Heart left ventricle (tissue), 16 donors: ENCODE measurements at regions of chr11 and their contacts with region 1.

Region 1: DNA sequence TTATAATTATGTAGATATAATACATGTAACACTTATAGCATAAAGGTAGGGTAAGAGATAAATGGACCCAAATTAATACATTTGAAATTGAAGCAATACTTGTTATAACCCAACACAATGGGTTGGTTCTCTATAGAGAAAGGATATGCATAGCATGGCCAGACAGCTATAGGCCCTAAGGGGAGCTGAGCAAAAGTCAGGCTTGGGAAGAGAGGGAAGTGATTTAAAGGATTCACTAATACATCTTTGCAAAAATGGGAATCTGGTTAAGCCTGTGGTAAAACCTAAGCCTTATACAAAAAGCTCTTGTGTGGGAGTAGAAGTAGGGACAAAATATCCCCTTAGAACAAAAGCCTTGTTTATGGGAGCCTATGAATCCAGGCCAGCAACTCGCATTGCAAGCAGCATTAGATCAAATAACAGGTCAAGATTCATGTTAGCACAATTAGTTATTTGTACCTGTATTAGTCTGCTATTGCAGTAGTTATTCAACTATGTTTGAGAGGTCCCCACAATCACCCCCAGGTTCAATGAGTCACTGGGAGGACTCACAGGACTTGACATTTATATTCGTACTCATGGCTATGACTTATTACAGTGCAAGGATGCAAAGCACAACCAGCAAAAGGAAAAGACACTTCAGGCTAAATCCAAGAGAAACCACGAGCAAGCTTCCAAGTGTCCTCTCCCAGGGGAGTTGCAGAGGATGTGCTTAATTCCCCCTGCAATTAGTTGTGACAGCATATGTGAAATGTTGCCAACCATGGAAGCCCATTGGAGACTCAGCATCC is 144.7 kb upstream of the LMO1 start:
- DNase-seq: no peak
- ATAC-seq: no peak
- H3K4me3 ChIP-seq: no peak overlapping the region
- H3K27ac ChIP-seq: no peak overlapping the region
- H3K4me1 ChIP-seq: no peaks in the 10 kb centered on the region
- H3K27me3 ChIP-seq: no peaks in the 10 kb centered on the region
- CTCF ChIP-seq: no peak
- POLR2A ChIP-seq: no peak

Region 2: DNA sequence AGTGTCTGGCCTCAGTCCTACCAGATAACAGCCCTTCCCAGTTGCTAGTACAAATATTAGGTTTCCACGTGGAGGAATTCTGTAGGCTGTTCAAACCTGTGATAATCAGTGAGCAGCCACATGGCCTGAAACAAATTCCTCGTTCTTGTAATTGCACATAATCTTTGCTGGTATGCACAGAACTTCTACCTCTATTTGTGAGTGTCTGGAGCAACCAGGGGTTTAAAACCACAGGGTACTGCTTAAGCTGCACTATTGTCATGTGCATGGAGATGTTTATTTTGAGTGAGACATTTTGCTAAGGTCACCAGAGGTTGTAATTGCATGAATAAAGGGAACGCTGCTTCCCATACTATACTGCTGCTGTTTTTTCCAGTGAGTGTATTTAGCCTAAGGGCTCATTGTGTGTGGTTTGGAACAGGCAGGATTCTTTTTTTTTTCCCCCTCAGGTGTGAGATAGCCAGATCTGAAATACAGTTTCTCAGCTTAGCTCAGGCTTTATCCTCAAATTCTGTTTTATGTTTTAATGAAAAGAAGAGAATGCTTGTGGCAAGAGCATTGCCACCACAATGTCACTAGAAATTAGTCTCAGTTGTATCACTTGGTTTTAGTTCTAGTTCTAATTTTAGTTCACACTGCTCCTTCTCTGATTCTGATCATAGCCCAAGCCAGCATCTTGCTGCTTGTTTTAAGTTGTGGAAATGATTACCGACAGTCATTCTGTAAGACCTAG is 795.5 kb before region 1 on chr11:
- intact Hi-C with region 1: no loop called
- DNase-seq: no peak
- ATAC-seq: peak; percentile 39 to 57 (median 50)
- H3K4me3 ChIP-seq: no peak overlapping the region
- H3K27ac ChIP-seq: peak overlapping the region in 1 of 12 donors; percentile 15
- H3K4me1 ChIP-seq: peaks cover 0 to 18% (median 10%) of the 10 kb centered on the region in 12 donors
- H3K27me3 ChIP-seq: no peaks in the 10 kb centered on the region
- CTCF ChIP-seq: no peak
- POLR2A ChIP-seq: no peak

Region 3: GRCh38 chr11:8426076-8426475 is 17.7 kb after region 1 on chr11:
- intact Hi-C with region 1: loop called in 1 of 10 experiments (anchors 1 kb)
- DNase-seq: peak in 1 of 5 donors; percentile 36
- ATAC-seq: peak in 1 of 4 donors; percentile 47
- H3K4me3 ChIP-seq: no peak overlapping the region
- H3K27ac ChIP-seq: no peak overlapping the region
- H3K4me1 ChIP-seq: peaks cover 0 to 8% (median 0%) of the 10 kb centered on the region in 12 donors
- H3K27me3 ChIP-seq: no peaks in the 10 kb centered on the region
- CTCF ChIP-seq: no peak
- POLR2A ChIP-seq: no peak

Region 4: DNA sequence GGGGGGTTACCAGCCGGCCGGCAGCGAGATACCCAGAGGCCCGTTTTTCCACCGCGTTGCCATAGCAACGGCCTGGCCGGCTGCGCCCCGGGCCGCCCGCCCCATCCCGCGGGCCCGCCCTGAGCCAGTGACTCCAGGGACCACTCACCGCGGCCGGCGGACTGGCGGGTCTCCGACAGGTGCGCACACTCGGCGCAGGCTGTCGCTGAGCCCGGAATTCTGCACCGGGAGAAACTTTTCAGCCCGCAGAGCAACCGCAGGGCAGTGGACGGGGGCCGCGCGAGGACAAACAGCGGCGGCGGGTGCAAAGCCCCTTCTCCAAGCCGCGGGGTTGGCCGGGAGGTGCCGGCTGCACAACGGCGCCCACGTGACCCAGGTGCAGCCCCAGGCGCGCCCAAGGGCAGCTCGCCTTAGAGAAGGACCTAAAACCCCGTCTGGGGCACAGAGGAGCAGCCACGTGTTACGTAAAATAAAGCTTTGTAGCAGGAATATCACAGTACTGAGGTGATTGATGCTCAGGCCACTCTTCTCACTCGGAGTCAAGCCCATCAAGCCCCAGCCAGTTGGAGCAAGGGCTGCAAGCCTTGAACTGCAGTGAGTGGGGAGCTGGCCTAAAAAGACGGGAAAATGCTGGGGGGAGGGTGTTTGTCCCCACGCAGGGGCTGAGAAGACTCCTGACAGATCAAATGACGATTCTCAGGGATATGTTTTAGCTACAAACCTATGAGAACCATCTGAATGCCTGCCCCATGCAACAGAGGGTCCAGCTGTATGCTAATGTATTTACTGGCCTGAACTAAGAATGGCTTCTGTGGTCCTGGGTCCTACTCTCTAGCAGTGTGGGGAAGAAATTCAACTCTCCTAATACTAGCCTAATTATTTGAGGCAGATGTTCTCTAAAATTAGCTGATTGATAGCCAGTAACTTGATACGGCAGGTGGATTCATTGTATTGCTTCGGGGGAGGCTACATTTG is 185.9 kb after region 1 on chr11 and contains the start of gene STK33:
- intact Hi-C with region 1: no loop called
- DNase-seq: peak; percentile 68 to 81 (median 74)
- ATAC-seq: peak; percentile 82 to 97 (median 96)
- H3K4me3 ChIP-seq: peak within 1 kb of the TSS; percentile 36 to 79 (median 65)
- H3K27ac ChIP-seq: peak within 1 kb of the TSS; percentile 9 to 75 (median 60)
- H3K4me1 ChIP-seq: peaks cover 0 to 15% (median 0%) of the 10 kb centered on the region in 12 donors
- H3K27me3 ChIP-seq: peaks cover 4 to 37% (median 8%) of the 10 kb centered on the region in 9 donors
- CTCF ChIP-seq: no peak
- POLR2A ChIP-seq: no peak
- total RNA-seq, gene STK33: 18.0 to 41.5 (median 31.0) TPM